ENCODE measurements at regions of chr11 and their contacts with region 1.

Region 1: GRCh38 chr11:69321877-69322361 is 28.0 kb downstream of the MYEOV start:
- DNase-seq: no peak
- H3K4me3 ChIP-seq: no peak overlapping the region
- H3K27ac ChIP-seq: no peak overlapping the region
- H3K4me1 ChIP-seq: no peaks in the 10 kb centered on the region
- H3K27me3 ChIP-seq: no peaks in the 10 kb centered on the region
- CTCF ChIP-seq: no peak
- POLR2A ChIP-seq: no peak

Region 2: GRCh38 chr11:69283446-69283845 is 38.5 kb before region 1 on chr11:
- intact Hi-C with region 1: loop called (anchors 2 kb)
- DNase-seq: no peak
- H3K4me3 ChIP-seq: no peak overlapping the region
- H3K27ac ChIP-seq: no peak overlapping the region
- H3K4me1 ChIP-seq: no peaks in the 10 kb centered on the region
- H3K27me3 ChIP-seq: no peaks in the 10 kb centered on the region
- CTCF ChIP-seq: no peak
- POLR2A ChIP-seq: no peak

Region 3: GRCh38 chr11:69296890-69297786 is 24.8 kb before region 1 on chr11:
- intact Hi-C with region 1: no loop called
- DNase-seq: peak; percentile 87 to 91
- H3K4me3 ChIP-seq: peak overlapping the region; percentile 11 to 50 (median 29)
- H3K27ac ChIP-seq: peak overlapping the region; percentile 84 to 93
- H3K4me1 ChIP-seq: peaks cover 9 to 22% of the 10 kb centered on the region in 2 donors
- H3K27me3 ChIP-seq: no peaks in the 10 kb centered on the region
- CTCF ChIP-seq: no peak
- POLR2A ChIP-seq: no peak